CD4-positive, alpha-beta memory T cell (primary cell): ENCODE measurements at regions of chr1 and their contacts with region 1.

Region 1: GRCh38 chr1:198620951-198621824 is 17.7 kb upstream of the PTPRC start:
- DNase-seq: peak; percentile 77 to 87 (median 80)
- H3K4me3 ChIP-seq: peak overlapping the region; percentile 18 to 59
- H3K4me3 Mint-ChIP-seq: peak overlapping the region; percentile 73 to 92 (median 85)
- H3K27ac ChIP-seq: peak overlapping the region; percentile 73
- H3K27ac Mint-ChIP-seq: peak overlapping the region; percentile 91 to 98 (median 95)
- H3K4me1 ChIP-seq: peaks cover 100% of the 10 kb centered on the region
- H3K4me1 Mint-ChIP-seq: peaks cover 62 to 88% (median 79%) of the 10 kb centered on the region in 4 donors
- H3K27me3 ChIP-seq: no peaks in the 10 kb centered on the region
- H3K27me3 Mint-ChIP-seq: no peaks in the 10 kb centered on the region

Region 2: GRCh38 chr1:198534548-198535418 is 86.4 kb before region 1 on chr1:
- CTCF ChIA-PET with region 1: interaction called, 13 read pairs
- POLR2A ChIA-PET with region 1: interaction called, 32 read pairs
- intact Hi-C with region 1: no loop called
- DNase-seq: no peak
- H3K4me3 ChIP-seq: peak overlapping the region in 1 of 2 donors; percentile 28
- H3K4me3 Mint-ChIP-seq: peak overlapping the region; percentile 65 to 83 (median 77)
- H3K27ac ChIP-seq: peak overlapping the region; percentile 49
- H3K27ac Mint-ChIP-seq: peak overlapping the region; percentile 29 to 90 (median 86)
- H3K4me1 ChIP-seq: peaks cover 59% of the 10 kb centered on the region
- H3K4me1 Mint-ChIP-seq: peaks cover 51 to 78% (median 61%) of the 10 kb centered on the region in 4 donors
- H3K27me3 ChIP-seq: no peaks in the 10 kb centered on the region
- H3K27me3 Mint-ChIP-seq: no peaks in the 10 kb centered on the region

Region 3: GRCh38 chr1:198606020-198606438 is 15.2 kb before region 1 on chr1:
- CTCF ChIA-PET with region 1: interaction called, 56 read pairs
- POLR2A ChIA-PET with region 1: interaction called, 110 read pairs
- intact Hi-C with region 1: no loop called
- DNase-seq: no peak
- H3K4me3 ChIP-seq: no peak overlapping the region
- H3K4me3 Mint-ChIP-seq: peak overlapping the region in 2 of 8 donors; percentile 21 to 51
- H3K27ac ChIP-seq: no peak overlapping the region
- H3K27ac Mint-ChIP-seq: peak overlapping the region in 3 of 7 donors; percentile 43 to 77 (median 56)
- H3K4me1 ChIP-seq: peaks cover 66% of the 10 kb centered on the region
- H3K4me1 Mint-ChIP-seq: peaks cover 45 to 66% (median 56%) of the 10 kb centered on the region in 4 donors
- H3K27me3 ChIP-seq: no peaks in the 10 kb centered on the region
- H3K27me3 Mint-ChIP-seq: no peaks in the 10 kb centered on the region

Region 4: GRCh38 chr1:198651650-198652400 is 30.6 kb after region 1 on chr1:
- CTCF ChIA-PET with region 1: interaction called, 31 read pairs
- POLR2A ChIA-PET with region 1: interaction called, 196 read pairs
- intact Hi-C with region 1: loop called (anchors 1 kb)
- DNase-seq: no peak
- H3K4me3 ChIP-seq: peak overlapping the region; percentile 12 to 39
- H3K4me3 Mint-ChIP-seq: peak overlapping the region; percentile 70 to 88 (median 78)
- H3K27ac ChIP-seq: peak overlapping the region; percentile 73
- H3K27ac Mint-ChIP-seq: peak overlapping the region; percentile 94 to 98 (median 96)
- H3K4me1 ChIP-seq: peaks cover 91% of the 10 kb centered on the region
- H3K4me1 Mint-ChIP-seq: peaks cover 49 to 73% (median 64%) of the 10 kb centered on the region in 4 donors
- H3K27me3 ChIP-seq: no peaks in the 10 kb centered on the region
- H3K27me3 Mint-ChIP-seq: no peaks in the 10 kb centered on the region

Region 5: DNA sequence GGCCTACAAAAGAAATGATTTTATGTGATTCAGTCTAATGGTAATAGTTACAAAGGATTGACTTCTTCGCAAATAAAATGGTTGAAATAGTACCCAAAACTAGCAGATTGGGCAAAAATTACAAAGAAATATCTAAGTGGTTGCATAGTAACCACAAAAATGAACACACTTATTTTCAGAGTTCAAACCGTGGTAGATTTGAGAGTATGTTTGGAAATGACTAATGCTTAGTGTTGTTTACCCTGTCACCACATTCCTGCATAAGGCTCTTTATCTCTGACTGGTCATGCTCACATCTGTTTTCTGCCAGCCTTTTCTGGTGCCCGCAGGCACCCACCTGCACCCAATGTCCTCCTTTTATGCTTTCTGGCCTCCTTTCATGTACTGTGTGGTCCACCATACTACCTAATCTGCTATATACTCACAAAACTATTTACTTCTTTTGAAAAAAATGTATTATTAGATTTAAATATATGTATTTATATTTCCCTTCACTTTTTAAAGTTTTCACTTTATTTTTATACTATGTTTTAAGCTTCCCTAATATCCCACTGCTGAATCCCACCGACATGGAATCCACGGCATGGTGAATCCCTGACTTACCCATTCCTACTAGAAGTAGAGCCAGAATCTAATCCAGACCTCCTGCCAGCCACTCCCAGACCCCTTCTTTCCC is 48.0 kb after region 1 on chr1:
- CTCF ChIA-PET with region 1: interaction called, 17 read pairs
- POLR2A ChIA-PET with region 1: interaction called, 113 read pairs
- intact Hi-C with region 1: no loop called
- DNase-seq: peak; percentile 56 to 81 (median 68)
- H3K4me3 ChIP-seq: no peak overlapping the region
- H3K4me3 Mint-ChIP-seq: peak overlapping the region; percentile 64 to 82 (median 76)
- H3K27ac ChIP-seq: peak overlapping the region; percentile 61
- H3K27ac Mint-ChIP-seq: peak overlapping the region; percentile 96 to 99 (median 97)
- H3K4me1 ChIP-seq: peaks cover 98% of the 10 kb centered on the region
- H3K4me1 Mint-ChIP-seq: peaks cover 75 to 95% (median 85%) of the 10 kb centered on the region in 4 donors
- H3K27me3 ChIP-seq: no peaks in the 10 kb centered on the region
- H3K27me3 Mint-ChIP-seq: no peaks in the 10 kb centered on the region